K562 (cell line): ENCODE measurements at regions of chr7 and their contacts with region 1.

Region 1: GRCh38 chr7:92245487-92246362 is at the starts of genes ANKIB1 and KRIT1:
- DNase-seq: peak; percentile 90 to 95 (median 94)
- ATAC-seq: peak; percentile 87
- H3K4me3 ChIP-seq: peak within 1 kb of the TSS; percentile 59
- H3K27ac ChIP-seq: peak within 1 kb of the TSS; percentile 92
- H3K4me1 ChIP-seq: peaks cover 0 to 8% of the 10 kb centered on the region in 2 experiments; a peak in 3 of 5 replicates
- H3K27me3 ChIP-seq: no peaks in the 10 kb centered on the region
- CTCF ChIP-seq: peak in 2 of 3 experiments; percentile 15 to 43; a peak in 2 of 6 replicates
- EP300 ChIP-seq: no peak
- POLR2A ChIP-seq: peak; percentile 98
- RAD21 ChIP-seq: peak in 1 of 2 experiments; percentile 14; a peak in 2 of 4 replicates
- polyA plus RNA-seq, gene ANKIB1: 5.9 to 7.4 TPM
- polyA plus RNA-seq, gene KRIT1: 21.5 to 21.7 TPM

Region 2: GRCh38 chr7:90337106-90337505 is 1908.6 kb before region 1 on chr7:
- CTCF ChIA-PET with region 1: no interaction called
- POLR2A ChIA-PET with region 1: no interaction called
- in situ Hi-C with region 1: no loop called
- intact Hi-C with region 1: no loop called
- DNase-seq: no peak
- ATAC-seq: no peak
- H3K4me3 ChIP-seq: no peak overlapping the region
- H3K27ac ChIP-seq: no peak overlapping the region
- H3K4me1 ChIP-seq: no peaks in the 10 kb centered on the region; a peak in 2 of 5 replicates
- H3K27me3 ChIP-seq: no peaks in the 10 kb centered on the region
- CTCF ChIP-seq: no peak
- EP300 ChIP-seq: no peak
- POLR2A ChIP-seq: no peak
- RAD21 ChIP-seq: no peak

Region 3: GRCh38 chr7:92292981-92293380 is 47.3 kb after region 1 on chr7:
- CTCF ChIA-PET with region 1: no interaction called
- POLR2A ChIA-PET with region 1: interaction called, 6 read pairs
- in situ Hi-C with region 1: no loop called
- intact Hi-C with region 1: loop called (anchors 10 kb)
- DNase-seq: no peak
- ATAC-seq: peak; percentile 27; the same call in 1 of the 3 replicates
- H3K4me3 ChIP-seq: no peak overlapping the region
- H3K27ac ChIP-seq: no peak overlapping the region
- H3K4me1 ChIP-seq: peaks cover 0 to 3% of the 10 kb centered on the region in 2 experiments; a peak in 1 of 5 replicates
- H3K27me3 ChIP-seq: no peaks in the 10 kb centered on the region
- CTCF ChIP-seq: no peak
- EP300 ChIP-seq: no peak
- POLR2A ChIP-seq: no peak
- RAD21 ChIP-seq: no peak

Region 4: DNA sequence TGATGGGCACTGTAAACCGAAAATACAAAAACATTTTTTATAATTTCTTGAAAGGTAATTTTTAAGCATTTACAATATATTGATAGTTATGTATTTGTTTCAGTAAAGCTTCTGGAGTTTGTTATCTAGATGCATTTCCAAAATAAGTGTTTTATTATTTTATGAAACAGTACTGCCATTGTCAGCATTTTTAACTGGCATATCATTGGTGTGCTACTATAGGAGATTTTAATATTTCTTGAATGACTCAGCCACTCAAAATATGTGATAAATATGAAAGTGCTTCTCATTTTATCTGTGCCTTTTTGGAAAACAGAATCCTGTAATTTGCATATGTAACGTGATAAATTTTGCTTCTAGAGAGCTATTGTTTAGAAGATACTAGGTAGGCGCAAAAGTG is 98.0 kb after region 1 on chr7:
- CTCF ChIA-PET with region 1: no interaction called
- POLR2A ChIA-PET with region 1: no interaction called
- in situ Hi-C with region 1: no loop called
- intact Hi-C with region 1: loop called (anchors 10 kb)
- DNase-seq: no peak
- ATAC-seq: no peak
- H3K4me3 ChIP-seq: no peak overlapping the region
- H3K27ac ChIP-seq: no peak overlapping the region
- H3K4me1 ChIP-seq: no peaks in the 10 kb centered on the region
- H3K27me3 ChIP-seq: no peaks in the 10 kb centered on the region
- CTCF ChIP-seq: no peak
- EP300 ChIP-seq: no peak
- POLR2A ChIP-seq: no peak
- RAD21 ChIP-seq: no peak

Region 5: DNA sequence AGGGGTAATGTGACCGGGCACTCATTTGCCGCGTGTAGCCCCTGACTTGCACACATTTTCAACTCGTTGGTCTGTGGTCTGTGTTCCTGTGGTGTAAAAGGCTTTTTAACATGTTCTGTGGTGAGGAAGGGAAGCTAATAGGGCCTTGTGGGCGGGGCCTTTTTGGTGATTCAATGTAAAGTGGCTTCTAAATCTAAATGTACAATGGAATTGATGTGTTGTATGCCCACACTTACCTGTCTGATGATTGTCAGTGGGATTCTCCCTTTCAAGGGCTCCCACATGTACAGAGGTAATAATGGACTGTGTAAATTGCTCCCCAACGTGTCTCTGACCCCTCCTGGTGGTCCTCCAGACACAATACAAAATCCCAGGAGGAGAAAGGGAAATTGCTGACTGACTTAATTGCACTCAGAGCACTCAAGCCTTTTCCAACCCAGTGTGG is 158.5 kb after region 1 on chr7:
- CTCF ChIA-PET with region 1: no interaction called
- POLR2A ChIA-PET with region 1: no interaction called
- in situ Hi-C with region 1: no loop called
- intact Hi-C with region 1: loop called (anchors 10 kb)
- DNase-seq: peak in 1 of 4 experiments; percentile 18
- ATAC-seq: peak; percentile 74
- H3K4me3 ChIP-seq: no peak overlapping the region
- H3K27ac ChIP-seq: no peak overlapping the region
- H3K4me1 ChIP-seq: no peaks in the 10 kb centered on the region
- H3K27me3 ChIP-seq: no peaks in the 10 kb centered on the region
- CTCF ChIP-seq: peak; percentile 44 to 58 (median 46); a peak in 4 of 6 replicates
- EP300 ChIP-seq: no peak
- POLR2A ChIP-seq: no peak
- RAD21 ChIP-seq: peak in 1 of 2 experiments; percentile 54; a peak in 2 of 4 replicates